MCF 10A (cell line): ENCODE measurements at regions of chr11 and their contacts with region 1.

Region 1: GRCh38 chr11:114180301-114181055 is 115.7 kb upstream of the NNMT start:
- DNase-seq: peak; percentile 61
- H3K4me3 Mint-ChIP-seq: peak overlapping the region; percentile 74
- H3K27ac Mint-ChIP-seq: peak overlapping the region; percentile 99
- H3K4me1 Mint-ChIP-seq: peaks cover 81% of the 10 kb centered on the region
- H3K27me3 Mint-ChIP-seq: no peaks in the 10 kb centered on the region
- CTCF ChIP-seq: peak; percentile 70

Region 2: GRCh38 chr11:113952588-113952987 is 227.9 kb before region 1 on chr11:
- CTCF ChIA-PET with region 1: no interaction called
- POLR2A ChIA-PET with region 1: no interaction called
- intact Hi-C with region 1: no loop called
- DNase-seq: no peak
- H3K4me3 Mint-ChIP-seq: no peak overlapping the region
- H3K27ac Mint-ChIP-seq: no peak overlapping the region
- H3K4me1 Mint-ChIP-seq: no peaks in the 10 kb centered on the region
- H3K27me3 Mint-ChIP-seq: peaks cover 82% of the 10 kb centered on the region
- CTCF ChIP-seq: no peak

Region 3: GRCh38 chr11:114066046-114066648 is 114.3 kb before region 1 on chr11:
- CTCF ChIA-PET with region 1: interaction called, 4 read pairs
- POLR2A ChIA-PET with region 1: interaction called, 57 read pairs
- intact Hi-C with region 1: no loop called
- DNase-seq: no peak
- H3K4me3 Mint-ChIP-seq: peak overlapping the region; percentile 95
- H3K27ac Mint-ChIP-seq: no peak overlapping the region
- H3K4me1 Mint-ChIP-seq: peaks cover 41% of the 10 kb centered on the region
- H3K27me3 Mint-ChIP-seq: no peaks in the 10 kb centered on the region
- CTCF ChIP-seq: no peak

Region 4: DNA sequence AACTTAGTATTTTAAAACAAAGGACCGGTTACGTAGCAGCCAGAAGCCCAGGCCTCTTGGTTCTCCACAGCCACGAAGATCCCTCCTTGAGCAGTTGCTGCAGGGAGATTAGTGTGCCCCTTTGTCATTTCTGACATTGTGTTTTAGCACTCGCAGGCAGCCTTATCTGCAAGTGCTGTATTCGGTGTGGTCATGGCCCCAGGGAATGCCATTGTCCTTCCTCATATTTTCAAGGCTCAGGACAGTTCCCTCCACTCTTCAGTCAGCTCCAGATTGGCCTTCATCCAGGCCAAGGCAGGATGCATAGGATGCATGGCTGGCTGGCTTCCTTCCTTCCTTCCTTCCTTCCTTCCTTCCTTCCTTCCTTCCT is 32.5 kb before region 1 on chr11:
- CTCF ChIA-PET with region 1: interaction called, 3 read pairs
- POLR2A ChIA-PET with region 1: interaction called, 21 read pairs
- intact Hi-C with region 1: no loop called
- DNase-seq: no peak
- H3K4me3 Mint-ChIP-seq: no peak overlapping the region
- H3K27ac Mint-ChIP-seq: peak overlapping the region; percentile 99
- H3K4me1 Mint-ChIP-seq: peaks cover 72% of the 10 kb centered on the region
- H3K27me3 Mint-ChIP-seq: no peaks in the 10 kb centered on the region
- CTCF ChIP-seq: no peak

Region 5: GRCh38 chr11:114166897-114167323 is 13.6 kb before region 1 on chr11:
- CTCF ChIA-PET with region 1: interaction called, 10 read pairs
- POLR2A ChIA-PET with region 1: interaction called, 1,399 read pairs
- intact Hi-C with region 1: no loop called
- DNase-seq: peak; percentile 92
- H3K4me3 Mint-ChIP-seq: peak overlapping the region; percentile 58
- H3K27ac Mint-ChIP-seq: peak overlapping the region; percentile 99
- H3K4me1 Mint-ChIP-seq: peaks cover 87% of the 10 kb centered on the region
- H3K27me3 Mint-ChIP-seq: no peaks in the 10 kb centered on the region
- CTCF ChIP-seq: no peak

Region 6: GRCh38 chr11:114257621-114258558 is 77.4 kb after region 1 on chr11:
- CTCF ChIA-PET with region 1: interaction called, 9 read pairs
- POLR2A ChIA-PET with region 1: interaction called, 11 read pairs
- intact Hi-C with region 1: no loop called
- DNase-seq: no peak
- H3K4me3 Mint-ChIP-seq: no peak overlapping the region
- H3K27ac Mint-ChIP-seq: peak overlapping the region; percentile 89
- H3K4me1 Mint-ChIP-seq: peaks cover 34% of the 10 kb centered on the region
- H3K27me3 Mint-ChIP-seq: no peaks in the 10 kb centered on the region
- CTCF ChIP-seq: no peak